SK-N-SH (cell line): ENCODE measurements at regions of chr10 and their contacts with region 1.

Region 1: DNA sequence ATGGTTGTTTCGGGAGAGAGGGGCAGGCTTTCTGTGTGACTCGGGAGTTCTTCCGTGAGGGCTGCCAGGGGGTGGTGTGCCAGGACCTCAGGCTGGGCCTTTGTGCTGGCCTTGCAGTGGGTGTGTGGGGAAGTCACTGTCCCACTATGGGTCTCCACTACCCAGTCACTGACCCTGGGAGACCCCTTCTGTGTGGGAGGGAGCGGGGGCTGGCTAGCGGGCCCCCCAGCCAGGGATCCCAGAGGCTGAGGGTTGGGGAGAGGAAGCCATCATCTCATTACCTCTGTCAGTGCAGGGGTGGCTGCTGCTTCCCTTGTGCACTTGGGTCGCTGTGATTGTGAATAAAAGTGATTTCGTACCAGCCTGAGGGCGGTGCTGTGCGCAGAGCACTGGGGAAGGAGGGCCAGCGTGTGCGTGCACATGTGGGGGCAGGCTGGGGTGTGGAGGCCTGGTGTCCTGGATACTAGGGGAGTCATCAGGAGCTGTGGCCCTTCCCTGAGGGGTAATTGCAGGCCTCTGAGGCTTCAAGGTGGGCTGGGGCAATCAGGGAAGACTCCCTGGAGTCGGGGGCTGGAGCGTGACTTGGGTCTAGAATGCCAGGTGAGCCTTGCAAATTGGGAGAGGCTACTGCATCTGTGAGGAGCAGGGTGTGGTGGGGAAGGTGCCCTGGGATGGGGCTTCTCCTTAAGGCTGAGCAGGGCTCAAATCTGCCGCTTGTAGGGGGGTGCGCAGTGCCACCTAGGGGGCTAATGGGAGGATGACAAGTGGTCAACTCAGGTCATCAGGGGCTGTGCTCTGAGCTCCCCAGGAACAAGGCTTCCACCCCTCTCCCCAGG is 98.9 kb downstream of the NEURL1 start:
- DNase-seq: peak; percentile 91
- H3K4me3 ChIP-seq: no peak overlapping the region; a peak in 1 of 4 replicates
- H3K27ac ChIP-seq: peak overlapping the region in 1 of 2 experiments; percentile 7; a peak in 1 of 4 replicates
- H3K4me1 ChIP-seq: peaks cover 0 to 15% of the 10 kb centered on the region in 2 experiments; a peak in 1 of 4 replicates
- H3K27me3 ChIP-seq: no peaks in the 10 kb centered on the region
- CTCF ChIP-seq: peak; percentile 71
- EP300 ChIP-seq: no peak
- RAD21 ChIP-seq: peak; percentile 79

Region 2: GRCh38 chr10:103416436-103417147 is 175.8 kb before region 1 on chr10:
- CTCF ChIA-PET with region 1: interaction called, 23 read pairs
- POLR2A ChIA-PET with region 1: no interaction called
- DNase-seq: peak; percentile 50
- H3K4me3 ChIP-seq: no peak overlapping the region
- H3K27ac ChIP-seq: no peak overlapping the region
- H3K4me1 ChIP-seq: no peaks in the 10 kb centered on the region
- H3K27me3 ChIP-seq: no peaks in the 10 kb centered on the region
- CTCF ChIP-seq: peak; percentile 79
- EP300 ChIP-seq: no peak
- RAD21 ChIP-seq: peak; percentile 69

Region 3: GRCh38 chr10:103578782-103579382 is 13.5 kb before region 1 on chr10:
- CTCF ChIA-PET with region 1: interaction called, 51 read pairs
- POLR2A ChIA-PET with region 1: no interaction called
- DNase-seq: no peak
- H3K4me3 ChIP-seq: no peak overlapping the region
- H3K27ac ChIP-seq: no peak overlapping the region
- H3K4me1 ChIP-seq: peaks cover 0 to 15% of the 10 kb centered on the region in 2 experiments; a peak in 1 of 4 replicates
- H3K27me3 ChIP-seq: no peaks in the 10 kb centered on the region; the same call in 1 of the 2 replicates
- CTCF ChIP-seq: no peak
- EP300 ChIP-seq: no peak
- RAD21 ChIP-seq: no peak

Region 4: GRCh38 chr10:103612462-103613365 is 20.3 kb after region 1 on chr10:
- CTCF ChIA-PET with region 1: interaction called, 13 read pairs
- POLR2A ChIA-PET with region 1: interaction called, 3 read pairs
- DNase-seq: no peak
- H3K4me3 ChIP-seq: no peak overlapping the region
- H3K27ac ChIP-seq: peak overlapping the region in 1 of 2 experiments; percentile 95; a peak in 2 of 4 replicates
- H3K4me1 ChIP-seq: peaks cover 0 to 67% of the 10 kb centered on the region in 2 experiments; a peak in 2 of 4 replicates
- H3K27me3 ChIP-seq: no peaks in the 10 kb centered on the region
- CTCF ChIP-seq: no peak
- EP300 ChIP-seq: no peak
- RAD21 ChIP-seq: no peak

Region 5: DNA sequence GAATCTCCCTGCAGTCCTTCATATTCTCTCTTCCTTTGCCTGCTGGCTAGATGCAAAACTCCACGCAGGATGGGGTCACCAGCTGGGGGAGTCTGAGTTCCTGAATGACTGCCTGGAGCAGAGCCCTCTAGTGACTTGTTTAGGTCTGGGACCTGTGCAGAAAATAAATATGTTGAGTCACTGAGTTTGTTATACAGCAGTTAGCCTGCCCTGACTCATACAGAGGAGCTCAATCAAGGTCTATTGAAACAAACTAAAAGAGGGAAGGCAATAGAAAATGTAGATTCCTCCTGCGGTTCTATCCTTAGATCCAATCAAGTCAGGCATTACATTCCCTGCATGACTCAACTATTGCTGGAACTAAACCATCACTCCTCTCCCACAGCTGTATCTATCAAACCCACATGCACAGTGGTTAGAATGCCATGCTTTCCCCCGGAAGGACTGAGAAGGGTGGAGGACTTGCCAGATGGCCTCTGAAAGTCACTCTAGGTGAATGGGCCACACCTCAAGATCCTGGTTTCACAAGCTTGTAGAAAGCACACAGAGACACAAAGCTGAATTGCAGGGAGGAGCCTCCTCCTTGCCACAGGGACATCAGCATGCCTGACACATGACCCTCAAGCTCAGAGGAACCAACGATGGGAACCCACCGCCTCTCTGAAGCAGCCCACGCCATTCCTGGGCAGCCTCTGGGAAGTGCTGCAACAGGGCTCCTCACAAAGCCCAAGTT is 189.1 kb after region 1 on chr10:
- CTCF ChIA-PET with region 1: no interaction called
- POLR2A ChIA-PET with region 1: no interaction called
- DNase-seq: no peak
- H3K4me3 ChIP-seq: no peak overlapping the region
- H3K27ac ChIP-seq: peak overlapping the region in 1 of 2 experiments; percentile 8; a peak in 1 of 4 replicates
- H3K4me1 ChIP-seq: peaks cover 0 to 45% of the 10 kb centered on the region in 2 experiments; a peak in 1 of 4 replicates
- H3K27me3 ChIP-seq: no peaks in the 10 kb centered on the region
- CTCF ChIP-seq: peak; percentile 34
- EP300 ChIP-seq: peak in 1 of 2 experiments; percentile 31; a peak in 1 of 4 replicates
- RAD21 ChIP-seq: no peak

Region 6: DNA sequence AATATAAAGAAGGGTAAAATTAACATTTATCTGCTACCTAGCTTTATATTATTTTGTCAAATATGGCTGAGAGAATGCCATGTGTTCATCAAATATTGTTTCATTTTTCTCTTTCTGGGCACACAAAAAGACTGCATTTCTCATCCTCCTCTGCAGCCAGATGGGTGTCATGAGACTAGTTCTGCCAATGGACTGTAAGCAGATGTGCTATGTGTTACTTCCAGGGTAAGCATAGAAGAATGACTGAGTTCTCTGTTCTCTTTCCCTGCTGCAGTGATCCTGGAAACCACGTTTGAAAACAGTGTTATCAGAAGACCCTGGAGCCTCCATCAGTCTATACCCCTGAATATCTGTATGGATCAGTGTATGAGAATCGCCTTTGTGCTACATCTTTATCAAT is 350.5 kb after region 1 on chr10:
- CTCF ChIA-PET with region 1: no interaction called
- POLR2A ChIA-PET with region 1: no interaction called
- DNase-seq: no peak
- H3K4me3 ChIP-seq: no peak overlapping the region
- H3K27ac ChIP-seq: no peak overlapping the region
- H3K4me1 ChIP-seq: no peaks in the 10 kb centered on the region
- H3K27me3 ChIP-seq: no peaks in the 10 kb centered on the region
- CTCF ChIP-seq: no peak
- EP300 ChIP-seq: no peak
- RAD21 ChIP-seq: no peak